B cell (primary cell): ENCODE measurements at regions of chr20 and their contacts with region 1.

Region 1: GRCh38 chr20:22339091-22339881 is 245.1 kb downstream of the FOXA2 start:
- DNase-seq: peak; percentile 64
- ATAC-seq: no peak
- H3K4me3 ChIP-seq: no peak overlapping the region
- H3K4me3 Mint-ChIP-seq: no peak overlapping the region
- H3K27ac ChIP-seq: no peak overlapping the region
- H3K27ac Mint-ChIP-seq: no peak overlapping the region
- H3K4me1 ChIP-seq: no peaks in the 10 kb centered on the region
- H3K4me1 Mint-ChIP-seq: peaks cover 1% of the 10 kb centered on the region
- H3K27me3 ChIP-seq: peaks cover 0 to 2% (median 0%) of the 10 kb centered on the region in 4 experiments
- H3K27me3 Mint-ChIP-seq: peaks cover 16% of the 10 kb centered on the region
- CTCF ChIP-seq: peak; percentile 81

Region 2: DNA sequence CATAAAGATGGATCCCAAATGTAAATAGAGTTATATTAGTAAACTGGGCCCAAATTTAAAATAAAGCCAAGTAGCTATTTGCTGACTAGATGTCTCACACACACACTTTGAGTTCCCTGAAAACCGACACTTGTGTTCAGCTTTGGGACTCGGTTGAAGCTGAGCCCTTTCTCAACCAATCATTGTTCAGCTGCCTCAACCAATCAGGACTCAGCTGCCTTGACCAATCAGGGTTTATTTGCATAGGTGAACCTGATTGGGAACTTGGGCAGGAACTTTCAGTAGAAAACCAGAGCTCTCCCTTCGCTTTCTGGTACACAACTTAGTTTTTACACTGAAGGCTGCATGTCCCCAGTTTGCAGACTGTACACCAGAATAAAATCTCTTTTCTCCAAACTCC is 56.6 kb before region 1 on chr20:
- CTCF ChIA-PET with region 1: no interaction called
- POLR2A ChIA-PET with region 1: no interaction called
- intact Hi-C with region 1: no loop called
- DNase-seq: no peak
- ATAC-seq: no peak
- H3K4me3 ChIP-seq: no peak overlapping the region
- H3K4me3 Mint-ChIP-seq: no peak overlapping the region
- H3K27ac ChIP-seq: no peak overlapping the region
- H3K27ac Mint-ChIP-seq: no peak overlapping the region
- H3K4me1 ChIP-seq: no peaks in the 10 kb centered on the region
- H3K4me1 Mint-ChIP-seq: no peaks in the 10 kb centered on the region
- H3K27me3 ChIP-seq: no peaks in the 10 kb centered on the region
- H3K27me3 Mint-ChIP-seq: no peaks in the 10 kb centered on the region
- CTCF ChIP-seq: no peak

Region 3: DNA sequence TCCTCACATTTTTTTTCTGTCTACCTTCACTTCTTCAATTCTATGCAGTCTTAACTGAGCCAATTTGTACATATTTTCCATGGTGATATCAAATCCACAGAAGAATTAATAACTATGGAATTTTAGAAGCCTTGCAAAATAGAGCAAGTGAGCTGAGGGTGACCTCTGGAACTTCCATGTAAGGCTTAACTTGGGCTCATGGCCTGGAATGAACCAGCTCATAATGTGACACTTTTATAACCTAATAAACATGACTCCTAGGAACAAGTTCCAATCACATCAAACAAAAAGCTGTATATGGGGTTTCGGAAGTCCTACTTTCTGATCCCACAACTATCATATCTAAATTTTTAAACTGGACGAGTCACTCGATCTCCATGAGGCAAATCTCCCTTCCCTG is 12.7 kb after region 1 on chr20:
- CTCF ChIA-PET with region 1: interaction called, 23 read pairs
- POLR2A ChIA-PET with region 1: interaction called, 10 read pairs
- intact Hi-C with region 1: no loop called
- DNase-seq: no peak
- ATAC-seq: no peak
- H3K4me3 ChIP-seq: no peak overlapping the region
- H3K4me3 Mint-ChIP-seq: no peak overlapping the region
- H3K27ac ChIP-seq: no peak overlapping the region
- H3K27ac Mint-ChIP-seq: no peak overlapping the region
- H3K4me1 ChIP-seq: no peaks in the 10 kb centered on the region
- H3K4me1 Mint-ChIP-seq: no peaks in the 10 kb centered on the region
- H3K27me3 ChIP-seq: no peaks in the 10 kb centered on the region
- H3K27me3 Mint-ChIP-seq: peaks cover 5% of the 10 kb centered on the region
- CTCF ChIP-seq: no peak

Region 4: GRCh38 chr20:22511943-22512910 is 172.9 kb after region 1 on chr20:
- CTCF ChIA-PET with region 1: no interaction called
- POLR2A ChIA-PET with region 1: no interaction called
- intact Hi-C with region 1: no loop called
- DNase-seq: no peak
- ATAC-seq: no peak
- H3K4me3 ChIP-seq: no peak overlapping the region
- H3K4me3 Mint-ChIP-seq: no peak overlapping the region
- H3K27ac ChIP-seq: no peak overlapping the region
- H3K27ac Mint-ChIP-seq: no peak overlapping the region
- H3K4me1 ChIP-seq: no peaks in the 10 kb centered on the region
- H3K4me1 Mint-ChIP-seq: no peaks in the 10 kb centered on the region
- H3K27me3 ChIP-seq: no peaks in the 10 kb centered on the region
- H3K27me3 Mint-ChIP-seq: no peaks in the 10 kb centered on the region
- CTCF ChIP-seq: no peak

Region 5: DNA sequence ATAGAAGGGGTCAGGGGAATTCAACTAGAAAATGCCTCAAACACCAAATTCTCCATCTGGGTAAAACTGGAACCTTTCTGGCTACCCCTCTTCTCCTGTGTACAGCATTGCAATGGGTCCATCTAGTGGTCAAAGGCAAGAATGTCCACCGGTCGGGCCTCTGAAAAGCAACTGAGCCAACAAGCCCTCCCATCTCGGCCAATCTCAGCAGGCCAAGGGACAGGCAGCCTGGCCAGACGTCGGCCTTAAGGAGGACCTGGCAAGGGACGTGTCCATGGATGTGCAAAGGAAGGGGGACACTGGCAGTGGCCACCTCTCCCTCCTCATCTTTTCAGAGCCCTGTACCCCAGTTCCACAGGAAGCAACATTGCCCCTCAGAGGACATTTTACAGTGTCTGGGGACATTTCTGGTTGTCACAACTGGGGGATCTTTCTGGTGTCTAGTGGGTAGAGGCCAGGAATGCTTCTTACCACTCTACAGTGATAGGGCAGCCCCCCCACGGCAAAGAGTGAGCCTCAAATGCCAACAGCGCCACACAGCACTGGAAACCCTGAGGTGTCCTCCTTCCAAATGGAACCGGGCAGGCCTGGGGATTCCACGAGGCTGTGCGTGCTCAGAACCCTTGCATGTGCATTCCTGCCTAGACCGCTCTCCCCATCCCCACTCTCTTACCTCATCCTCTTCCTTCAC is 344.9 kb after region 1 on chr20:
- CTCF ChIA-PET with region 1: interaction called, 75 read pairs
- POLR2A ChIA-PET with region 1: no interaction called
- intact Hi-C with region 1: loop called (anchors 1 kb)
- DNase-seq: peak; percentile 63
- ATAC-seq: peak; percentile 47
- H3K4me3 ChIP-seq: no peak overlapping the region
- H3K4me3 Mint-ChIP-seq: no peak overlapping the region
- H3K27ac ChIP-seq: no peak overlapping the region
- H3K27ac Mint-ChIP-seq: no peak overlapping the region
- H3K4me1 ChIP-seq: peaks cover 8% of the 10 kb centered on the region in 2 donors
- H3K4me1 Mint-ChIP-seq: peaks cover 4% of the 10 kb centered on the region
- H3K27me3 ChIP-seq: peaks cover 0 to 2% (median 0%) of the 10 kb centered on the region in 4 experiments
- H3K27me3 Mint-ChIP-seq: no peaks in the 10 kb centered on the region
- CTCF ChIP-seq: peak; percentile 66

Region 6: DNA sequence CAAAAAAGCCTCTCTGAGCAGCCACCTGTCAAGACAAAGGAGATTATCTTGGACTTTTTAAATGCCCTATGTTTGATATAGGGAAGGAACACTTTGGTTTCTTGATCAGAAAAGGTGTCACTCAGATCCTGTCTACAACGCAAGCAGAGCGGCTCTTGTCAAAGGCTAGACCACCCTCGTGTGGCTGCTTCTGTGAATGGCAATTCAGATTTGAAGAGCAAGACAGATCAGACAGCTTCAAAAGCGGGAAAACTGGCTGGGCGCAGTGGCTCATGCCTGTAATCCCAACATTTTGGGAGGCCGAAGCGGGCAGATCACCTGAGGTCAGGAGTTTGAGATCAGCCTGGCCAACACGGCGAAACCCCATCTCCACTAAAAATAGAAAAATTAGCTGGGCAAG is 1001.2 kb after region 1 on chr20:
- CTCF ChIA-PET with region 1: interaction called, 4 read pairs
- POLR2A ChIA-PET with region 1: no interaction called
- intact Hi-C with region 1: loop called (anchors 5 kb)
- DNase-seq: no peak
- ATAC-seq: no peak
- H3K4me3 ChIP-seq: no peak overlapping the region
- H3K4me3 Mint-ChIP-seq: no peak overlapping the region
- H3K27ac ChIP-seq: no peak overlapping the region
- H3K27ac Mint-ChIP-seq: no peak overlapping the region
- H3K4me1 ChIP-seq: no peaks in the 10 kb centered on the region
- H3K4me1 Mint-ChIP-seq: no peaks in the 10 kb centered on the region
- H3K27me3 ChIP-seq: no peaks in the 10 kb centered on the region
- H3K27me3 Mint-ChIP-seq: peaks cover 7% of the 10 kb centered on the region
- CTCF ChIP-seq: peak; percentile 15

Region 7: DNA sequence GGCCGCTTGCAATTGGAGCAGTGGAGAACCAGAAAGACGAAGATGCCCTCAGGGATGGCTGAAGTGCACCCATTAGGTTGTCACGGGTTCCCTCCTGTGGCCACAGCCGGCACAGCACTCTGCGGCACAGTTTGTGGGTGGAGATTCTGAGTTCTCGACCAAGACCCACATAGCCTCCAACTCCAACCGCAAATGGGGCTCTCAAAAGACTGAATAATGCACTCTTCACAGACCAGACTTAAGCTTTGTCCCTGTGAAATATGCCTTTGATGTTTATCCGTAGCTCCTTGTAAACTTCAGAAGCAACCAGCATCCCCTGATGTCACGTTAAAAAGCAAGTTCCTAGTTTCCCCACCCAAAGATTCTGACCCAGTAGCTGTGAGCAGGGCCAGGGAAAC is 1267.4 kb after region 1 on chr20:
- CTCF ChIA-PET with region 1: interaction called, 5 read pairs
- POLR2A ChIA-PET with region 1: no interaction called
- intact Hi-C with region 1: loop called (anchors 5 kb)
- DNase-seq: peak; percentile 54
- ATAC-seq: peak; percentile 39
- H3K4me3 ChIP-seq: no peak overlapping the region
- H3K4me3 Mint-ChIP-seq: no peak overlapping the region
- H3K27ac ChIP-seq: no peak overlapping the region
- H3K27ac Mint-ChIP-seq: no peak overlapping the region
- H3K4me1 ChIP-seq: no peaks in the 10 kb centered on the region
- H3K4me1 Mint-ChIP-seq: no peaks in the 10 kb centered on the region
- H3K27me3 ChIP-seq: no peaks in the 10 kb centered on the region
- H3K27me3 Mint-ChIP-seq: peaks cover 3% of the 10 kb centered on the region
- CTCF ChIP-seq: peak; percentile 77

Region 8: DNA sequence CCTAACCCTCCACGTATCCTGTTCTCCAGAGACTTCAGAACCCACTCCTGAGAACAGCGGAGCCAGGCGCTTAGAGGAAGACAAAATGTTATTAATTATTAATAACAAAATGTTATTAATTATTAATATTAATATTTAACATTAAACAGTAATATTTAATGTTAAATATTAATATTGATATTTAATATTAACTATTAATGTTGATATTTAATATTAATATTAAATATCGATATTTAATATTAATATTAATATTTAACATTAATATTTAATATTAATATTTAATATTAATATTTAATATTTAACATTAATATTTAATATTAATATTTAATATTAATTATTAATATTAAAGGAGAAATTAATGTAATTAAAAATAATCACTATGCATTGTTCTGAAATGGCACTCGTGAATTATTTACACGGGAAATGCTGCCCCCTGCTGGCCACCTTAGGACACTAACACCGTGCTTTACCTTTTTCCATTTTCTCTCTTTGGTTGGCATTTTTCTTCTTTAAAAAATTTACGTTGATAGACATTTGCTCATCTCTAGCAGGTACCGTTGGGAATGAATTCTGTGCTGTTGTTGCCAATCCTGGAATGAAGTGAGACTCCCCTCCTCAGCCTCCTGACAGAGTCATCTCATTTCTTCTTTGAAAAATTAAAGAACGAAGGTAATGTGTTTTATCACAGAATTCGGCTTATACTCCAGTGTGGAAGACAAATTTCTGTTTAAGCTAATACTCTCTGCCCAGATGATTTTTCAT is 1656.8 kb after region 1 on chr20:
- CTCF ChIA-PET with region 1: no interaction called
- POLR2A ChIA-PET with region 1: no interaction called
- intact Hi-C with region 1: loop called (anchors 5 kb)
- DNase-seq: peak; percentile 53
- ATAC-seq: no peak
- H3K4me3 ChIP-seq: no peak overlapping the region
- H3K4me3 Mint-ChIP-seq: no peak overlapping the region
- H3K27ac ChIP-seq: no peak overlapping the region
- H3K27ac Mint-ChIP-seq: no peak overlapping the region
- H3K4me1 ChIP-seq: no peaks in the 10 kb centered on the region
- H3K4me1 Mint-ChIP-seq: no peaks in the 10 kb centered on the region
- H3K27me3 ChIP-seq: peaks cover 0 to 4% (median 0%) of the 10 kb centered on the region in 4 experiments
- H3K27me3 Mint-ChIP-seq: peaks cover 18% of the 10 kb centered on the region
- CTCF ChIP-seq: peak; percentile 84